IMR-90 (cell line): ENCODE measurements at regions of chr1 and their contacts with region 1.

Region 1: GRCh38 chr1:101366513-101367215 is 129.8 kb downstream of the S1PR1 start:
- DNase-seq: peak; percentile 53
- ATAC-seq: peak; percentile 24; the same call in 1 of the 2 replicates
- H3K4me3 ChIP-seq: no peak overlapping the region
- H3K27ac ChIP-seq: peak overlapping the region; percentile 59; the same call in 1 of the 2 replicates
- H3K4me1 ChIP-seq: peaks cover 15% of the 10 kb centered on the region
- H3K27me3 ChIP-seq: no peaks in the 10 kb centered on the region
- CTCF ChIP-seq: no peak
- POLR2A ChIP-seq: no peak
- RAD21 ChIP-seq: no peak

Region 2: DNA sequence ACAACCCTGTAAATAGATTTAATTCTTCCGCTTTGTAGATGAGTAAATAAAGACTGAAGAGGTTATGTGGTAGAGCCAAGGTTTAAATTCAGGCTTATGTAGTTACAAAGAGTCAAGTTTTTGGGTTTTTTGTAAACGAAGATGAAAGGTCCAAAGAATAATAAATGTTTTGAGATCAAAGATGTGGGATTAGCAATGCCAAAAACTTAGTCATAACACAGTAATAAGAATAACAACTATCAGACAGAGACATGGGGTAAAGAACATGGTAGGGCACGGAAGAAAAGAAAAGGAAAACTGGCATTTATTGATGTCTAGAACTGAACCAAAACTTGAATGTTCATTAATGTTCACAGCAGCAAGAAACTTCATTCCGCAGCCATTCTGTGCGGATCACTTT is 514.9 kb before region 1 on chr1:
- CTCF ChIA-PET with region 1: no interaction called
- POLR2A ChIA-PET with region 1: no interaction called
- dilution Hi-C with region 1: no loop called
- in situ Hi-C with region 1: no loop called
- intact Hi-C with region 1: no loop called
- DNase-seq: no peak
- ATAC-seq: no peak
- H3K4me3 ChIP-seq: no peak overlapping the region
- H3K27ac ChIP-seq: no peak overlapping the region
- H3K4me1 ChIP-seq: no peaks in the 10 kb centered on the region; the same call in 1 of the 2 replicates
- H3K27me3 ChIP-seq: no peaks in the 10 kb centered on the region
- CTCF ChIP-seq: no peak
- POLR2A ChIP-seq: no peak
- RAD21 ChIP-seq: no peak

Region 3: GRCh38 chr1:101407505-101408211 is 41.0 kb after region 1 on chr1:
- CTCF ChIA-PET with region 1: no interaction called
- POLR2A ChIA-PET with region 1: no interaction called
- dilution Hi-C with region 1: no loop called
- in situ Hi-C with region 1: no loop called
- intact Hi-C with region 1: loop called (anchors 2 kb)
- DNase-seq: no peak
- ATAC-seq: no peak
- H3K4me3 ChIP-seq: no peak overlapping the region
- H3K27ac ChIP-seq: no peak overlapping the region
- H3K4me1 ChIP-seq: no peaks in the 10 kb centered on the region
- H3K27me3 ChIP-seq: no peaks in the 10 kb centered on the region
- CTCF ChIP-seq: no peak
- POLR2A ChIP-seq: no peak
- RAD21 ChIP-seq: no peak